ENCODE measurements at regions of chr4 and their contacts with region 1.

Region 1: DNA sequence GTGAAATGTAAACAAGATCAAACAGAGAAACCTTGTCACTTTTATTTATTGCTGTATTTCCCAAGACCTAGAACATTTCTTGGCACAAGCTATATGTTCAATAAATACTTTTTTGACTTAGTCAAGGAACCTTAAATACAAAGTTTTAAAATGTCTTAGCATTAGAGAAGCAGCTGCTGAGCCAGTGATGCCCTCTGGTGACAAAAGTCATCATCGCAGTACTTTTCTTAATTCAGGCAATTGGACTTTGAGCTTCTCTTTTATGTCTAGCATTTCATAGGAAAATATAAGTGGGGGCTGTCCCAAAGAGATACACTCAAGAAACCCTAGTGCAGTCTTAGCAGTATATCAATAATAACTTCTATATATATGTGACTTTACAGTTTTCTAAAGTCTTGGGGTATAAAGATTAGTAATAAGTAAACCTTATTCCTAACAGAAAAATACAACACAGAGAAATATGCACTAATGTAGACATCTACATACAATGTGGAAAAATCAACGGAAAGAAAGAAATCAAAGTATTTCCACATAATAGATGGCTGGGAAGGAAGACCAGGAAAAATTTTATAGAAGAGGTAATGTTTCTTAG is 118.4 kb downstream of the DTHD1 start:
- DNase-seq: peak in 1 of 2 donors; percentile 9
- ATAC-seq: no peak
- H3K4me3 ChIP-seq: no peak overlapping the region
- H3K27ac ChIP-seq: no peak overlapping the region
- H3K4me1 ChIP-seq: no peaks in the 10 kb centered on the region
- H3K27me3 ChIP-seq: no peaks in the 10 kb centered on the region
- CTCF ChIP-seq: peak in 7 of 9 donors; percentile 20 to 70 (median 50)

Region 2: GRCh38 chr4:36255577-36255976 is 144.3 kb before region 1 on chr4:
- intact Hi-C with region 1: no loop called
- DNase-seq: no peak
- ATAC-seq: peak in 6 of 8 donors; percentile 20 to 42 (median 26)
- H3K4me3 ChIP-seq: no peak overlapping the region
- H3K27ac ChIP-seq: peak overlapping the region in 1 of 10 donors; percentile 75
- H3K4me1 ChIP-seq: peaks cover 0 to 27% (median 0%) of the 10 kb centered on the region in 9 donors
- H3K27me3 ChIP-seq: no peaks in the 10 kb centered on the region
- CTCF ChIP-seq: no peak

Region 3: GRCh38 chr4:36351082-36351666 is 48.7 kb before region 1 on chr4:
- intact Hi-C with region 1: loop called in 1 of 10 experiments (anchors 2 kb)
- DNase-seq: peak; percentile 29 to 34
- ATAC-seq: no peak
- H3K4me3 ChIP-seq: no peak overlapping the region
- H3K27ac ChIP-seq: no peak overlapping the region
- H3K4me1 ChIP-seq: peaks cover 0 to 9% (median 0%) of the 10 kb centered on the region in 9 donors
- H3K27me3 ChIP-seq: no peaks in the 10 kb centered on the region
- CTCF ChIP-seq: peak; percentile 30 to 77 (median 63)